Dendritic cell treated with granulocyte-macrophage colony-stimulating factor and Interleukin-4, amounts not matched to agents 40 ng/mL and 50 ng/mL, for 4 days (primary cell): ENCODE measurements at regions of chr5 and their contacts with region 1.

Region 1: GRCh38 chr5:133944263-133945185 is 23.9 kb downstream of the C5orf15 start:
- H3K4me3 Mint-ChIP-seq: no peak overlapping the region
- H3K27ac Mint-ChIP-seq: no peak overlapping the region
- H3K4me1 Mint-ChIP-seq: no peaks in the 10 kb centered on the region
- H3K27me3 Mint-ChIP-seq: peaks cover 8% of the 10 kb centered on the region

Region 2: GRCh38 chr5:133423618-133424282 is 520.8 kb before region 1 on chr5:
- intact Hi-C with region 1: loop called (anchors 5 kb)
- H3K4me3 Mint-ChIP-seq: no peak overlapping the region
- H3K27ac Mint-ChIP-seq: no peak overlapping the region
- H3K4me1 Mint-ChIP-seq: peaks cover 7% of the 10 kb centered on the region
- H3K27me3 Mint-ChIP-seq: peaks cover 24% of the 10 kb centered on the region

Region 3: DNA sequence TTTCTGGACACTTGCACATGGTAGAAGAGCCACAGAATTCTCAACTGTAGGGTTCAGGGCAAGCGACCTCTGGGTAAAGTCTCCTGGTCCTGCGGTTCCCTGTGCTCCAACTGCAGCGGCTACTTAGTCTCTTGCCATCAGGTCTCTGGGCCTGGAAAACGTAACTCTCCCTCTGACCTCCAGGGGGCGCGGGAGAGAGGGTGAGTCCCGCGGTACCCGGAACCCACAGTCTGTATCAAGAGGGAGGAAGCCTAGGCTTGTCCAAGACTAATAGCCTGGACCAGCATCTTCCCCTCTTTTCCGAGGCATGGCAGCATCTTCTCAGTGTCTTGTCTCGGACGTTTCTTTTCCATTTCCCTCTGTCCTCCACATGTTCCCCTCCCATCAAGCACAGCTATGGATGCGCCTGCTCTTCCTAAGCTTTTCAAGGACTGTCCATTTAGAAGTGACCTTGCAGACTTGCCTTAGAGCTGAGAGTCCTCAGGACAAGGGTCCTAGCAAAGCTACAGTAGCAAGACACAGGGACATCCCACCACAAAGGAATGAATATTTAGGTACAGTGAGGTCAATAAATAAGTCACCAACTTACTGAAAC is 391.5 kb before region 1 on chr5:
- intact Hi-C with region 1: loop called (anchors 5 kb)
- H3K4me3 Mint-ChIP-seq: no peak overlapping the region
- H3K27ac Mint-ChIP-seq: no peak overlapping the region
- H3K4me1 Mint-ChIP-seq: no peaks in the 10 kb centered on the region
- H3K27me3 Mint-ChIP-seq: peaks cover 25% of the 10 kb centered on the region